ENCODE measurements at regions of chr1 and their contacts with region 1.

Region 1: DNA sequence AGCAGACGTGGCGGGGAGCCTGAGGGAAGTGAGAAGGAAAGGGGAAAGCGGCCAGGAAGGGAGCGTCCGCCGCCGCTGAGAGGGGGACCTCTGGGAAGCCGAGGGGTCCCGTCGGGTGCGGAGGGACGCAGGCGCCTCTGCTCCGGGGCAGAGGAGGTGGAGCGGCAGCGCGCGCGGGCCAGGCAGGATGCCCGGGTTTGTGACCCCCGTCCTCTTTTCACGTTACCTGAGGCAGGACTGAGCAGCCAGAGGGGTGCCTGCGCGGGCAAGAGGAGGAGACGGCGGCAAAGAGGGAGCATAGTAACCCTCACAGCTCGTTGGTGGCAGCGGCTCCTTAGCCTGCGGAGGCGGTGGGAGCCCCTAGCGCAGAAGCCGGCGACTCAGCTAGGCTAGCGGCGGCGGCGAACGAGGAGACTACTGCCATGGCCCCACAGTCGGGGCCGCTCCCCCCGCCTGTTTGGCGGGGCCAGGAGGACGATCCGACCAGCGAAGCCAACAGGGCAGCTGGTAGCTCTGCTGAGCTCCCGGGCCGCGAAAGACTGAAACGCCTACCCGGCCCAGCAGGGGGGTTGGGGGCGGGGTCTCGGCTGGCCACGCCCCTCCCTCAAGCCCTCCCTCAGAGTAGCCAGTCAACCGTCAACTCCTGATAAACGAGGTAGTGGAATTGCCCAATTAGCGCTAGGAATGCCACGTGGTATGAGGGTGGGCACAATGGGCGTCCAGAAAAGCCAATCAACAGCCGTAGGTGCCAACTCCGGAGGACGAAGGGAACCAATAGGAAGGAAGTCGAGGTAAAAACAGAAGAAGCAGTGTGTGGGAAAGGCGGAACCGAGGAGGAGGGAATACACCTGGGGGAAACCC is at the start of gene TESK2:
- DNase-seq: peak; percentile 99
- ATAC-seq: peak; percentile 95
- H3K4me3 Mint-ChIP-seq: no peak within 1 kb of the TSS
- H3K27ac Mint-ChIP-seq: no peak within 1 kb of the TSS
- H3K4me1 Mint-ChIP-seq: peaks cover 4% of the 10 kb centered on the region
- H3K27me3 Mint-ChIP-seq: peaks cover 4% of the 10 kb centered on the region
- total RNA-seq, gene TESK2: 3.0 to 4.4 TPM

Region 2: GRCh38 chr1:45303582-45304310 is 187.1 kb before region 1 on chr1:
- CTCF ChIA-PET with region 1: interaction called, 41 read pairs
- DNase-seq: peak; percentile 99
- ATAC-seq: peak; percentile 89
- H3K4me3 Mint-ChIP-seq: peak overlapping the region; percentile 92
- H3K27ac Mint-ChIP-seq: peak overlapping the region; percentile 97
- H3K4me1 Mint-ChIP-seq: peaks cover 41% of the 10 kb centered on the region
- H3K27me3 Mint-ChIP-seq: no peaks in the 10 kb centered on the region

Region 3: GRCh38 chr1:45326627-45327623 is 163.9 kb before region 1 on chr1 and contains the start of gene HPDL:
- CTCF ChIA-PET with region 1: interaction called, 36 read pairs
- DNase-seq: peak; percentile 83
- ATAC-seq: peak; percentile 89
- H3K4me3 Mint-ChIP-seq: peak within 1 kb of the TSS; percentile 80
- H3K27ac Mint-ChIP-seq: peak within 1 kb of the TSS; percentile 83
- H3K4me1 Mint-ChIP-seq: peaks cover 24% of the 10 kb centered on the region
- H3K27me3 Mint-ChIP-seq: no peaks in the 10 kb centered on the region
- total RNA-seq, gene HPDL: 16.3 to 23.4 TPM

Region 4: GRCh38 chr1:45339789-45340570 is 150.9 kb before region 1 on chr1 and contains the starts of genes MUTYH and TOE1:
- CTCF ChIA-PET with region 1: interaction called, 67 read pairs
- DNase-seq: peak; percentile 98
- ATAC-seq: peak; percentile 88
- H3K4me3 Mint-ChIP-seq: peak within 1 kb of the TSS; percentile 99
- H3K27ac Mint-ChIP-seq: peak within 1 kb of the TSS; percentile 99
- H3K4me1 Mint-ChIP-seq: peaks cover 54% of the 10 kb centered on the region
- H3K27me3 Mint-ChIP-seq: no peaks in the 10 kb centered on the region
- total RNA-seq, gene MUTYH: 65.3 to 67.2 TPM
- total RNA-seq, gene TOE1: 21.4 to 26.5 TPM

Region 5: GRCh38 chr1:45359882-45360513 is 130.9 kb before region 1 on chr1:
- CTCF ChIA-PET with region 1: interaction called, 163 read pairs
- DNase-seq: peak; percentile 71
- ATAC-seq: peak; percentile 69
- H3K4me3 Mint-ChIP-seq: no peak overlapping the region
- H3K27ac Mint-ChIP-seq: no peak overlapping the region
- H3K4me1 Mint-ChIP-seq: peaks cover 5% of the 10 kb centered on the region
- H3K27me3 Mint-ChIP-seq: no peaks in the 10 kb centered on the region

Region 6: DNA sequence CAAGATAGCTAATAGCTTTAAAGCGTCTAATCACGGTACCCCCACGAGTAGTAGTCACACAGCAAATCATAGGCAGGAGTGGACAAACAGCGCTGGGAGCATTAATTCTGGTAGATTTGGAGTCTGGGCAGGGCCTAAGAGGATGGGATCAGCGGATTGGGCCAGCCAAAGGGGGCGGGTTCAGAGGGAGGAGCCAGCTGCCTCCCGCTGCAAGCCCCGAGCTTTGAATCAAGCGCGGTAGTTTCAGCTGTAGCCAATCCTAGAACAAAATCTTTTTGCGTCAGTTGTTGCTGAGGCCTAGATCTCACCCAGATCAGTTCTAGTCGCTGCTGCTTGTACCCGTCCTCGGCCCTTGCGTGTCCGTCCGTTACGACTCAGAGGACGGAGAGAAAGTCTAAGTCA is 92.4 kb after region 1 on chr1:
- CTCF ChIA-PET with region 1: interaction called, 13 read pairs
- DNase-seq: peak; percentile 97
- ATAC-seq: peak; percentile 76
- H3K4me3 Mint-ChIP-seq: peak overlapping the region; percentile 87
- H3K27ac Mint-ChIP-seq: peak overlapping the region; percentile 100
- H3K4me1 Mint-ChIP-seq: peaks cover 26% of the 10 kb centered on the region
- H3K27me3 Mint-ChIP-seq: no peaks in the 10 kb centered on the region

Region 7: DNA sequence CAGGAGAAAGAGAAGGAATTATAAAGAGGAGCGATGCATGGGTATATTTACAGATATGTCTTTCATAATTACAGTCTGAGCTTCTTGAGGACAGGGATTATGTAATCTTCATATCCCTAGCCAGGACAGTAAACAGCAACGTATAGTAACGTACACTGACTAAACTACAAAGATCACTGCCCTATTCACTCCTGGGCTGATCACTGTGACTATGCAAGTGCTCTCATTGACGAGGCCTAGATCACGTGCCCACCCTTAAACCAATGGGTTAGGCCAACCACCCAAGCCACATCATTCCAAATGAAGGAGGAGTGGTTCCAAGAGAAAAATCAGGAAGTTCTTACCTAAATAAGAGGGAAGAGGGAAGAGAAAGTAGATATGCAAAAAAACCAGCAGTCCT is 623.1 kb after region 1 on chr1:
- CTCF ChIA-PET with region 1: no interaction called
- DNase-seq: no peak
- ATAC-seq: no peak
- H3K4me3 Mint-ChIP-seq: no peak overlapping the region
- H3K27ac Mint-ChIP-seq: no peak overlapping the region
- H3K4me1 Mint-ChIP-seq: peaks cover 10% of the 10 kb centered on the region
- H3K27me3 Mint-ChIP-seq: no peaks in the 10 kb centered on the region